Activated T-helper 1 cell treated with anti-CD3 and anti-CD28 coated beads, Interleukin-12 subunit alpha, Interleukin-12 subunit beta, Interleukin-2, Interleukin-4 antibody, amounts not matched to agents 30 ng/mL and 10 ng/mL and 1 ng/mL, durations not matched to agents 14 hours and 24 hours and 36 hours (primary cell): ENCODE measurements at regions of chr19 and their contacts with region 1.

Region 1: DNA sequence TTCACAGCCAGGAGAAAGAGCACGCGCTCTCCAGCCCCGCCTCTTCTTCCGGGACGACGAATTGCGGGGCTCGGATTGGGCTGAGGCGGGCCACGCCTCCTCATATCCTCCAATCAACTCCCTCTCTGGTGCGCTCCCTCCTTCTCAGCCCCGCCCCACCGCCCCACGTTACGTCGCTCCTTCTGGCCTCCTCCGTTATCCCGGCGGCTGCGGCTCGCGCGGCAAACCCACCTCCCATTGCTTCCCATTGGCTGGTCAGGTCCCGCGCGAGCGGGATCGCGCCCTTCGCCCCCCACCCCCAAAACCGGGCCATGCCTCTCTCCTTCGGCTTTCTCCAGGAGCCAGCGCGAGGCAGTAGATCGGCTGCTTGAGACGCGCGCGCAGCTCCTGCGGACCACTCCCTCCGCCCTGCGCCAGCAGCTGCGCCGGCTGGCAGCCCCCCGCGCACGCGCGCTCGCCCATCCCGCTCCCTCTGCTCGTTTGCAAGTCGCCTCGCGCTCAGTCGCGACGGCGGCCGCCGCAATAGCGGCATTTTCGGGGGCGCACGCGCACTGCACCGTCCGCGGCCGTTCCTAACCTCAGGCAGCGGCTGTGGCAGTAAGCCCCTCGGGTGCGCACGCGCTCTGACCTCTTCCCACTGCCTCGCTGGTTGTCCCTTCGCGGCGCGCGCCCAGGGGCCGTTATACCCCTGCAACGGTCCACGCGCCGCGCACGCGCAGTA is 512 bp upstream of the ARHGAP35 start:
- DNase-seq: peak; percentile 97
- H3K4me3 Mint-ChIP-seq: peak overlapping the region; percentile 92
- H3K27ac Mint-ChIP-seq: peak overlapping the region; percentile 97
- H3K4me1 Mint-ChIP-seq: peaks cover 25% of the 10 kb centered on the region
- H3K27me3 Mint-ChIP-seq: no peaks in the 10 kb centered on the region

Region 2: DNA sequence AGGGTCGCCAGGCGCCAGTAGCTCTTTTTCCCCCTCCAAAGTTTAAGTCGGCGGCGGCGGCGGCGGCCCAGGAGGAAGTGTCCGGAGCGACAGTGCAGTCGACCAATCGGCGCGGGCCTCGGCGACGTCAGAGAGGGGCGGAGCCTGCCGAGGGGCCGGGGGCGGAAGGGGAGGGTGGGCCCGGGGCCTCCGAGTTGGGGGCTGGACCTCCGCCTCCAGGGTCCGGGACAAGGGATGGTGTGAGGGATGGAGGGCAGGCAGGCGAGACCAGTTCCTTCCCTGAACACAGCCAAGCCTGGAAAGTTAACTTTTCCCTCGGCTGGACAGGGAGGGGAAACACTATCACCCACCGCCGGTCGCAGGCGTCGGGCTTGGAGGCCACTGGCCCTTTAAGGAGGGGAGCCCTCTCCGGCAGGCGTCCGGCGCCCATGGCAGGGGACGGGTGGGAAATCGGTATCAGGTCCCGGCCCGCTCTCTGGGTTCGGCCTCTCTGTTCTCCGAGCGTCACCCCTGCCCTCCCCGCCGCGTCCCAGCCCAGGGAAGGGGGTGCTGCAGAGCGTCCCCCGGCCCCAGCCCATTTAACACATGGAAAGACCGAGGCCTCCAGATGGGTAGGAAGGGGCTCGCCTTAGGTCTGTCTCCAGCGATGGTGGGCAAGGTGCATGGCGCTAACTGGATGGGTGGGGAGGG is 143.1 kb before region 1 on chr19 and contains the start of gene PRKD2:
- intact Hi-C with region 1: loop called (anchors 1 kb)
- DNase-seq: peak; percentile 86
- H3K4me3 Mint-ChIP-seq: peak within 1 kb of the TSS; percentile 93
- H3K27ac Mint-ChIP-seq: peak within 1 kb of the TSS; percentile 94
- H3K4me1 Mint-ChIP-seq: peaks cover 42% of the 10 kb centered on the region
- H3K27me3 Mint-ChIP-seq: no peaks in the 10 kb centered on the region
- total RNA-seq, gene PRKD2: 88.6 and 92.9 TPM in 2 replicates

Region 3: DNA sequence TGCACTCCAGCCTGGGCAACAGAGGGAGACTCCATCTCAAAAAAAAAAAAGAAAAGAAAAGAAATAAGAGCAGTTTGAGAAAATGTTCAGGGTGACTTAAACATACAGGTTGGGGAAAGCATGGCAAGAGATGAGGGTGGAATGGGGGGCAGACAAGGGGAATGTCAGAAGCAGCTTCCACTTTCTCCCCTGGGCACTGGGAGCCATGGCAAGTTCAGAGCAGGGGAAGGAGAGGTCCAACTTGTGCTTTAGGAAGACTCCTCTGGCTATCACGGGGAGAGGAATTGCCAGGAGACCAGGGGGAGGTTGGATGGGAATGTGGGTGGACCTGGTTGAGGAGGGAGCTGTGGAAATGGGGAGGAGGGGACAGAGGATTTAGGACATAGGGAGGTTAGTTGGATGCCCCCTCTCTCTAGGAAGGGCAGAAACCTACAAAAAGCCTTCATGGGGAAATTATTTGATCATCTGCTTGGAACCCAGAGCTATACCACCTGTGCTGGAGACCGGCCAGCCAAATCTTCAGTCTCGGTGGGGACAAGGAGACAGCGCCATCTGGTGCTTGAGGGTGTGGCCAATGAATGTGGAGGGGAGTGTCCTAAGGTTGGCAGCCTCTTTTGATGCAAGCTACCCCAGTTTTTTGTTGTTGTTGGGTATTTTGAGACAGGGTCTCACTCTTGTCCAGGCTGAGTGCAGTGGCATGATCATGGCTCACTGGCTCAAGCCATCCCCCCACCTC is 106.7 kb before region 1 on chr19:
- intact Hi-C with region 1: no loop called
- DNase-seq: peak; percentile 56
- H3K4me3 Mint-ChIP-seq: no peak overlapping the region
- H3K27ac Mint-ChIP-seq: no peak overlapping the region
- H3K4me1 Mint-ChIP-seq: peaks cover 11% of the 10 kb centered on the region
- H3K27me3 Mint-ChIP-seq: no peaks in the 10 kb centered on the region

Region 4: DNA sequence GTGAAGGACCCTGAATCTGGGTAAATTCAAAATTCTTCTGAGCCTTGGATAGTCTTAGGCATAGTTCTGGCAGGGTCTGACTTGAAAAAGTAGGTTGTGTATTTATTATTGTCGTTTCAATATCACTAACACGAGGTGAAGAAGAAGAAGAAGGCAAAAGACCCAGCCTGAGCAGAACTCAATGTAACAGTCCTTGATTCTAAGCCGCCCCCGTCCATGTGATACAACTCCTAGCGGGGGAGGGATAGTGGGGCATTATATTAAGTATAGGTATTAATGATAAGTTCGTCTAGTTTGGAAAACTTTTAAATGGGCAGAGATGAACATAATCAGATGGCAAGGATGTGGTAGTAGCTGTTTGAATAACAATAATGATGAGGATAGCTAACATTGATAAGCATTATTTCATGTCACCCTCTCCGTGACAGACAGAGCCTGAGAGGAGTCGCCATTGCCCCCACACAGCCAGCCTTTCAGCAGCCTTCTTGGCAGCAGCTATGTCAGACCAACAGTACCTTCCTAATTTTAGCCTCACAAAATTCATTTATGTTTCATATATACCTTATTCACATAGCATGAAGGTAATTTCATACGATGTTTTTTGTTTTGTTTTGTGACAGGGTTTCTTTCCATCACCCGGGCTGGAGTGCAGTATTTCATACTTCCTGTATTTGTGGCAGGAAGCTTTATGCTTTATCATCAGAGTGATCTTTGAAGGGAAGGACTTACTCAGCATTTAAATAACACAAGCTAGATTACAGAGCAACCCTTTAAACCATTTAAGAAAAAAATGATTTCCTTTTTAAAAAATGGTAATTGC is 94.9 kb after region 1 on chr19:
- intact Hi-C with region 1: loop called (anchors 1 kb)
- DNase-seq: peak; percentile 43
- H3K4me3 Mint-ChIP-seq: peak overlapping the region; percentile 88
- H3K27ac Mint-ChIP-seq: peak overlapping the region; percentile 93
- H3K4me1 Mint-ChIP-seq: peaks cover 79% of the 10 kb centered on the region
- H3K27me3 Mint-ChIP-seq: no peaks in the 10 kb centered on the region

Region 5: GRCh38 chr19:47035127-47036096 is 175.1 kb after region 1 on chr19:
- intact Hi-C with region 1: loop called (anchors 1 kb)
- DNase-seq: peak; percentile 93
- H3K4me3 Mint-ChIP-seq: peak overlapping the region; percentile 86
- H3K27ac Mint-ChIP-seq: peak overlapping the region; percentile 92
- H3K4me1 Mint-ChIP-seq: peaks cover 24% of the 10 kb centered on the region
- H3K27me3 Mint-ChIP-seq: peaks cover 14% of the 10 kb centered on the region

Region 6: DNA sequence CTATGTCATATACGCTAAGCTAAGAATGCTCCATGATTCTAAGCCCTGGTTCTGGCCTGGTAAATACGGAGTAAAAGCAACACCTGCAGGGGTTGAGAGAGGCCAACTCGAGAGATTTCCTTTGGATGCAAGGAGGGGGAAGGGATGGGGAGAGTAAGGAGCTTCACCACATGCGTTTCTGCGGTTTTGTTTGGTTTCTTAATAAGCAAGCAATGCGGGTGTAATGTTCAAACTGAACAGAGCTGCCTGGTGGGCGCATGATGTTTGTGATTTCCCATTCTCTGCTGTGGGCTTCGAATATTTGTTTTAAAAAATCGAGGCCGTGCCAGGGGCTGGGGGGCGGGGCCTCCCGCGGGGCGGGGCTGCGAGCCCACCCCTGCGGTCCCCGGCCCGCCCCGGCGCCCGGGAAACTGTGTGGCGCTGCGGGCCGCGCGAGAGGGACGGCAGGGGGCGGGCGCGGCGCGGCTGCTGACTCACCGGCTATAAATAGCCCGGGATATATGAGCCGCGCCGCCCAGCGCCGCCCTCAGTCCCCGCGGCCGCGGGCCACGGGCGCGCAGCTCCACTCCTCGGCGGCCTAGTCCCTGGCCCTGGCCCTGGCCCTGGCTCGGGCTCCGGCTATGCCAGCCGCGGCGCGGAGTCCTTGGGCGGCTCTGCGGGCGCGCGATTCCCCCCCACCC is 365.6 kb after region 1 on chr19:
- intact Hi-C with region 1: loop called (anchors 5 kb)
- DNase-seq: peak; percentile 87
- H3K4me3 Mint-ChIP-seq: peak overlapping the region; percentile 38
- H3K27ac Mint-ChIP-seq: peak overlapping the region; percentile 82
- H3K4me1 Mint-ChIP-seq: peaks cover 6% of the 10 kb centered on the region
- H3K27me3 Mint-ChIP-seq: no peaks in the 10 kb centered on the region